Tibial artery (tissue), 4 donors: ENCODE measurements at regions of chr2 and their contacts with region 1.

Region 1: GRCh38 chr2:181715033-181715630 is 34.8 kb upstream of the NEUROD1 start:
- DNase-seq: peak in 1 of 2 donors; percentile 52
- H3K4me3 ChIP-seq: no peak overlapping the region
- H3K27ac ChIP-seq: no peak overlapping the region
- H3K4me1 ChIP-seq: no peaks in the 10 kb centered on the region
- H3K27me3 ChIP-seq: no peaks in the 10 kb centered on the region
- CTCF ChIP-seq: peak; percentile 40 to 60

Region 2: GRCh38 chr2:180125245-180125962 is 1589.7 kb before region 1 on chr2:
- intact Hi-C with region 1: loop called (anchors 10 kb)
- DNase-seq: peak; percentile 49 to 62
- H3K4me3 ChIP-seq: no peak overlapping the region
- H3K27ac ChIP-seq: no peak overlapping the region
- H3K4me1 ChIP-seq: no peaks in the 10 kb centered on the region
- H3K27me3 ChIP-seq: peaks cover 0 to 6% of the 10 kb centered on the region in 2 donors
- CTCF ChIP-seq: no peak

Region 3: GRCh38 chr2:181231886-181232621 is 483.1 kb before region 1 on chr2:
- intact Hi-C with region 1: no loop called
- DNase-seq: no peak
- H3K4me3 ChIP-seq: no peak overlapping the region
- H3K27ac ChIP-seq: no peak overlapping the region
- H3K4me1 ChIP-seq: no peaks in the 10 kb centered on the region
- H3K27me3 ChIP-seq: no peaks in the 10 kb centered on the region
- CTCF ChIP-seq: no peak

Region 4: DNA sequence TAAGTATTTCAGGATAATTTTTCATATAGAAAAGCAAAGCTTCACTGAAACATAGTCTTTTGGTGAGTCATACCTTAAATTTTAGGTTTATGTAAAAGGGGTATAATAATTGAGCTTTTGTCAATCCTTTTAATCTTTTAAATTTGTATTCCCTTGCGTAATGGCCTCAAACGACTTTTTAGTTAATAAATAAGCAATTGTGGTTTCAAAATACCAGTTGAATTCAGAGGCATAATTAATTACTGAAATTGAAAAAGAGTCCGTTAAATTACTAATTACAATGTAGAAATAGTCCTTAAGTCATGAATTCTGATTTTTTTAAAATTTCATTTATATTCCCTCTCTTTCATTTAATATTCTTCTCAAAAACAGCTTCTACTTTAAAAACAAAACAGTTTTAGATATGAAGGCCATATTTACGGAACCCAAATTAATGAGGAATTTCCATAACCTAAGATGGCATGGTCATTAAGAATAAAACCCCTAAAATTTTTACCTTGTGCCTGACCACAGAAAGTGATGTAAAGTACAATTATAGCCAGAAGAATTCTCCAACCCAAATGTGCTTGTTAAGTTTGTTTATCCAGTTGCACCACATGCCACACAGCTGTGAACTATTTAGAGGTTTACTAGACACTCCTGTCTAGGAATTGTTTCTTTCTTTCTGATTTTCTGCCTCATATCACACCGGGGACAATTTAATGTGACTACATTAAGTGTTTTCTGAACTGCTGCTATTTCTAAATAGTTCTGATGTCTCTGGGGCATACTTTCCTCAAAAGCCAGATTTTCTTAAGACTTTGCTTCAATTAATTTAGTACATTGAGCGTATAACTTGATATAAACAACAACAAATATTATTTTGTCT is 318.6 kb before region 1 on chr2:
- intact Hi-C with region 1: loop called (anchors 5 kb)
- DNase-seq: no peak
- H3K4me3 ChIP-seq: no peak overlapping the region
- H3K27ac ChIP-seq: no peak overlapping the region
- H3K4me1 ChIP-seq: no peaks in the 10 kb centered on the region
- H3K27me3 ChIP-seq: no peaks in the 10 kb centered on the region
- CTCF ChIP-seq: no peak

Region 5: GRCh38 chr2:181546008-181546407 is 169.1 kb before region 1 on chr2:
- intact Hi-C with region 1: no loop called
- DNase-seq: no peak
- H3K4me3 ChIP-seq: no peak overlapping the region
- H3K27ac ChIP-seq: no peak overlapping the region
- H3K4me1 ChIP-seq: no peaks in the 10 kb centered on the region
- H3K27me3 ChIP-seq: no peaks in the 10 kb centered on the region
- CTCF ChIP-seq: no peak